ENCODE measurements at regions of chr1 and their contacts with region 1.

Region 1: GRCh38 chr1:87292684-87293493 is 35.8 kb upstream of the LMO4 start:
- DNase-seq: no peak
- H3K4me3 ChIP-seq: no peak overlapping the region
- CTCF ChIP-seq: peak; percentile 51

Region 2: GRCh38 chr1:87131809-87132283 is 161.0 kb before region 1 on chr1:
- CTCF ChIA-PET with region 1: interaction called, 10 read pairs
- POLR2A ChIA-PET with region 1: no interaction called
- DNase-seq: no peak
- H3K4me3 ChIP-seq: peak overlapping the region; percentile 50
- CTCF ChIP-seq: peak; percentile 97

Region 3: GRCh38 chr1:87305762-87306161 is 12.9 kb after region 1 on chr1:
- CTCF ChIA-PET with region 1: interaction called, 32 read pairs
- POLR2A ChIA-PET with region 1: no interaction called
- DNase-seq: no peak
- H3K4me3 ChIP-seq: no peak overlapping the region
- CTCF ChIP-seq: no peak

Region 4: GRCh38 chr1:87362834-87363426 is 70.0 kb after region 1 on chr1:
- CTCF ChIA-PET with region 1: no interaction called
- POLR2A ChIA-PET with region 1: no interaction called
- DNase-seq: no peak
- H3K4me3 ChIP-seq: no peak overlapping the region
- CTCF ChIP-seq: no peak

Region 5: GRCh38 chr1:87402241-87403002 is 109.5 kb after region 1 on chr1:
- CTCF ChIA-PET with region 1: no interaction called
- POLR2A ChIA-PET with region 1: no interaction called
- DNase-seq: peak; percentile 33
- H3K4me3 ChIP-seq: no peak overlapping the region
- CTCF ChIP-seq: no peak

Region 6: DNA sequence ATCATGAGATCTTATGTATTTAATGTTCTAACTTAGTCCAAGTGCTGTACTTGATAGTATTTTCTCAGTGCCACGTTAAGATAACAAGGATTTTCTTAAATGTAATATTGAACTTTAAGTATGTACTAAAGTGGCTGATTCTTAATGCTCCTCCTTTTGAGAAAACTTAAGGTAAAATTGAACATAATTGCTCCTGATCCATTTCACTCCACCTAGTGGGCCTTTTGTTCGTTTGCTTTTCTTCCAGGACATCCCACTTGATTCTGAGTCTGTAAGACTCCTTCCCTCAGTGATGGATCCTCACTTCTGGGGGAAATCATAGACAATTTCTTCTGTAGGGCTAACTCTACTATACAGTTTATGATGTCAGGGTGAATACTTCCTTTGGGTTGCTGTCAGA is 208.8 kb after region 1 on chr1:
- CTCF ChIA-PET with region 1: no interaction called
- POLR2A ChIA-PET with region 1: no interaction called
- DNase-seq: no peak
- H3K4me3 ChIP-seq: no peak overlapping the region
- CTCF ChIP-seq: no peak

Region 7: DNA sequence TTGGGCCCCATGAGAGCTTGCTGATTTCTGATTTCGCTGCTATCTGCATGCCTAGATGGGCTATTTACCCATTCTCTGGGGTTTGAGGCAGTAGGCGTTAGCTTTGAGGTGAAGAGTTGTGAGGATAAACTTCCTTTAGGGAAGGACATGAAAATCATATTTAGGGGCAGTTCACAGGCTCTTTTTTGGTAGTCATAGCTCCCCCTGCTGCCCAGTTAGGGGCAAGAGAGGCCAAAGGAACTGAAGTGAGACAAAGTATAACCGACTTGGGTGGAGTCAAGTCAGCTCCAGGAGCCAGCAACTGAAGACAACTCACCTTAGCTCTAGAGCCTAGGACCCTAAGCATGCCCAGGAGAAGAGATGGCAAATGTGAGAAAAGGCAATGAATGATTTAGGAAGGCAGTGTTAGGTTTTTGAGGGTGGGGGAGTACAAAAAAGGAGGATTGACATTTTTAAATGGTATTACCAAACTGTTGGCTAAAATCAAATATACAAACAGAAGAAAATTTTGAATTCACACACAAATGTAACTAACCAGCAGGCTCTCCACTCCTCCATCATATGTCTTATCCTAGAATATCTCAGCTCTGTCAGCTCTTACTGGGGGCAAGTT is 660.9 kb after region 1 on chr1:
- CTCF ChIA-PET with region 1: interaction called, 29 read pairs
- POLR2A ChIA-PET with region 1: no interaction called
- DNase-seq: no peak
- H3K4me3 ChIP-seq: no peak overlapping the region
- CTCF ChIP-seq: peak; percentile 62

Region 8: DNA sequence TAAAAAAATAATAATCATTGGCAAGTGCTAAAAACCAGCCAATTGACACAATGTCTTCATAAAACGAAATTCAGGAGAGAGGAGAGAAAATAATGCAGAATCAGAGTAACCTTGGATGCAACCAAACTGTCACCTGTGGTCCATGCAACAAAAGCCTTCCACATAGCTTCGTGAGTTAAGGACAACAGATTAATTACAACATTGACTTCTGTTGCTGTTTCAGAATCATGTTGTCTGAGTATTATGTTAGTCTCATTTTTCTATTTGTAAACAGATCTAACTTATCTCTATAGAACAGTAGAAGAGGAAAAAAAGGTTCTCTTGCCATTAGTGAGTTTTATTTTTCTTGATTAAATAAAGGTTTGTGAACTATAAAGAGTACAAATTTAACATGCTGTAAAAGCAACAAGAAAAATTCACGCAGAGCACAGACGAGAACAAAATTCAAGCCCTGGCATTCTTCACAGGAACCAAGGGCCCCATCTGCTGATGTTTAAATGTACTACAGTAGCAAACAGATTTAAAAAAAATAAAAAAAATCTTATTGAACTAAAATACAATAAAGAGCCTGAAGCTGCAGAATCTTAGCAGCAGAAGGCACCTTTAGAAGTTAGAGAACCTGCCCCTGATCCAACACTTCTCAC is 1010.1 kb after region 1 on chr1:
- CTCF ChIA-PET with region 1: interaction called, 15 read pairs
- POLR2A ChIA-PET with region 1: no interaction called
- DNase-seq: peak; percentile 17
- H3K4me3 ChIP-seq: no peak overlapping the region
- CTCF ChIP-seq: peak; percentile 25